OCI-LY7 (cell line): ENCODE measurements at regions of chr13 and their contacts with region 1.

Region 1: DNA sequence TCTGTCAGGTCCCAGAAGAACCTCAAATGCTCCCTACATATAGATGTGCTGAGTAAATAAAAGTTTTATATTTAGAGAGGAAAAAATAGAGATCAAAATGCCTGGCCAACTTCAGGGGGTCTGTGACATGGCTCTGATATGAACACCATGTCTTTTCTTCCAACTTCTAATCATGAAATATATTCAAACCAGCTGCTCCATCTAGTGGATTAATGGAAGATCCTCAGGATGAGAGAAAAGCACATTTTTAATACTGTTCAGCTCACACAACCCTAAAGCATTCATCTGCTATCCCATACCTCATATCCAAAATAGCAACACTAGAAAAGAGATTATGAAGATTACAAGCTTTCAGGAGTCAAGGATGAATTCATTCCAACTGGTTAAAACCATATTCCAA is 56.0 kb upstream of the DOCK9 start:
- DNase-seq: peak; percentile 37
- H3K4me3 ChIP-seq: no peak overlapping the region
- H3K27ac ChIP-seq: no peak overlapping the region
- H3K4me1 ChIP-seq: no peaks in the 10 kb centered on the region
- CTCF ChIP-seq: peak; percentile 69

Region 2: GRCh38 chr13:98528663-98529570 is 504.9 kb before region 1 on chr13:
- CTCF ChIA-PET with region 1: no interaction called
- POLR2A ChIA-PET with region 1: no interaction called
- intact Hi-C with region 1: no loop called
- DNase-seq: no peak
- H3K4me3 ChIP-seq: no peak overlapping the region
- H3K27ac ChIP-seq: no peak overlapping the region
- H3K4me1 ChIP-seq: peaks cover 20% of the 10 kb centered on the region
- CTCF ChIP-seq: no peak

Region 3: GRCh38 chr13:98869408-98870090 is 164.3 kb before region 1 on chr13:
- CTCF ChIA-PET with region 1: no interaction called
- POLR2A ChIA-PET with region 1: no interaction called
- intact Hi-C with region 1: loop called (anchors 1 kb)
- DNase-seq: peak; percentile 24
- H3K4me3 ChIP-seq: no peak overlapping the region
- H3K27ac ChIP-seq: no peak overlapping the region
- H3K4me1 ChIP-seq: no peaks in the 10 kb centered on the region
- CTCF ChIP-seq: peak; percentile 66